CD4-positive, alpha-beta T cell (primary cell): ENCODE measurements at regions of chr11 and their contacts with region 1.

Region 1: DNA sequence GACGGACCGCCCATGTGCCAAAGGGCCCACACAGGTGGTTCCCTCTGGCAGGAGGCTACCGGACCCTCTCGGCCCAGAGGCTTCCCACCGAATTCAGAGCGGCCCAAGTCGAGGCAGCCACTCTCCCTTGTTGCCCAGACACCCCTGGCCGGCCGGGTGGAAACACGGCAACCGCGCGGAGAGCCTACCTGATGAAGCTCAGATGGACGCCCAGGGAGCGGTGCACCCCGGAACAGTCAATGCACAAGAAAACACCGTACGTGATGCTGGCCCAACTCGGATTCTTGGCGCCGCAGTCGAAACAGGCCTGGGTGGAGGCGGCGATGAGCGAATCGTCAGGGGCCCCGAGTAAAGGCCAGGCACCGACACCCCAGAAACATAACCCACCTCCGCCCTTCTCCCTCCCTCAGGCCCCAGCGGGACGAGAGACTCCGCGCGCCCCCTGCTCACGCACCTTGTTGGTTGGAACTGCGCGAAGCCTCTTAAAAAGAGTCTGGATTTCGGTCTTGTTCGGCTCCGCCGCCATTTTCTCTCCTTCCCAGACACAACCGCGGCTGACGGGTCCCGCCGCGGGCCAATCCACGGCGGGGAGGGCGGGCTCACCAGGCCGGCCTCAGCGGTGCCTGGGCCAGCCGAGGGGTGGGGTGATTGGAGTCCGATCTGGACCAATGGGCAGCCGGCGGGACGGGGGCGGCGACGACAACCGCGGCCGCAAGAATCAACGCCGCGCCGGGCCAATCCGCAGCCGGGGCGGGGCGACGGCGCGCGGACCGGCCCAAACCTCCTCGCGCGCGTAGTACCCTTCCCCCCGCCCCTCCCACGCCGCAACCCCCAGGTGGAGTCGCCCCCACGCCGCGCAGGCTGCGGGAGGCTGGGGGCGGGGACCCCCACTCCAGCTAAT is at the start of gene ARFGAP2:
- DNase-seq: peak; percentile 89 to 99 (median 95)
- ATAC-seq: peak; percentile 88
- H3K4me3 ChIP-seq: peak within 1 kb of the TSS; percentile 100
- H3K4me3 Mint-ChIP-seq: peak within 1 kb of the TSS; percentile 99
- H3K27ac ChIP-seq: peak within 1 kb of the TSS; percentile 90 to 96
- H3K27ac Mint-ChIP-seq: peak within 1 kb of the TSS; percentile 97
- H3K4me1 ChIP-seq: peaks cover 56% of the 10 kb centered on the region
- H3K4me1 Mint-ChIP-seq: peaks cover 54% of the 10 kb centered on the region
- H3K27me3 ChIP-seq: no peaks in the 10 kb centered on the region
- H3K27me3 Mint-ChIP-seq: peaks cover 5% of the 10 kb centered on the region
- CTCF ChIP-seq: no peak
- total RNA-seq, gene ARFGAP2: 161 to 174 TPM

Region 2: DNA sequence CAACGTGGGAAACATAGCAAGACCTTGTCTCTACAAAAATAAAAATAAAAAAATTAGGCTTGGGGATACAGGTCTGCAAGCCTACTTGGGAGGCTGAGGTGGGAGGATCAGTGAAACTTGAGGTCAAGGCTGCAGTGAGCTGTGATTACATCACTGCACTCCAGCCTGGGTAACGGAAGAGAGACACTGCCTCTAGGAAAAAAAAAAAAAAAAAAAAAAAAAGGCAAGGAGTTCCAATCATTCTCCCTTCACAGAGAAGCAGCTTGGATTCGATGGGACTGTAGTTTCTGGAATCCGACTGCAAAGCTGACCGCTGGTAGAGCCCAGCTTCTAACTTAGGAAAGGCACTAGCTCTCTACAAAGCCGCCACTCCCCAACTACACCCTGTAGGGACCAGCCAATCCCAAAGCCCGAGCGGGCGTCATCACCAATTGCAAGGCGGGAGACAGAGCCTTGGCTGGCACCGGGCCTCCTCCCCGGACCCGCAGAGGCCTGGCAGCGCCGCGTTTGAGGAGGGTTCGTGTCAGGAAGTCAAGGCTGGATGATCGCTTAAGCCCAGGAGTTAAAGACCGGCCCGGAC is 37.5 kb after region 1 on chr11:
- CTCF ChIA-PET with region 1: interaction called, 5 read pairs
- POLR2A ChIA-PET with region 1: interaction called, 47 read pairs
- intact Hi-C with region 1: loop called (anchors 1 to 2 kb)
- DNase-seq: peak; percentile 68 to 92 (median 78)
- ATAC-seq: peak; percentile 70
- H3K4me3 ChIP-seq: peak overlapping the region; percentile 67
- H3K4me3 Mint-ChIP-seq: peak overlapping the region; percentile 100
- H3K27ac ChIP-seq: peak overlapping the region; percentile 80 to 91
- H3K27ac Mint-ChIP-seq: peak overlapping the region; percentile 97
- H3K4me1 ChIP-seq: peaks cover 32% of the 10 kb centered on the region
- H3K4me1 Mint-ChIP-seq: peaks cover 38% of the 10 kb centered on the region
- H3K27me3 ChIP-seq: no peaks in the 10 kb centered on the region
- H3K27me3 Mint-ChIP-seq: no peaks in the 10 kb centered on the region
- CTCF ChIP-seq: no peak

Region 3: GRCh38 chr11:47259178-47259977 is 82.8 kb after region 1 on chr11:
- CTCF ChIA-PET with region 1: interaction called, 13 read pairs
- POLR2A ChIA-PET with region 1: interaction called, 10 read pairs
- intact Hi-C with region 1: loop called in 1 of 2 experiments (anchors 1 kb)
- DNase-seq: peak in 8 of 14 experiments; percentile 9 to 61 (median 30)
- ATAC-seq: peak; percentile 82
- H3K4me3 ChIP-seq: no peak overlapping the region
- H3K4me3 Mint-ChIP-seq: no peak overlapping the region
- H3K27ac ChIP-seq: no peak overlapping the region
- H3K27ac Mint-ChIP-seq: no peak overlapping the region
- H3K4me1 ChIP-seq: peaks cover 17% of the 10 kb centered on the region
- H3K4me1 Mint-ChIP-seq: peaks cover 14% of the 10 kb centered on the region
- H3K27me3 ChIP-seq: no peaks in the 10 kb centered on the region
- H3K27me3 Mint-ChIP-seq: no peaks in the 10 kb centered on the region
- CTCF ChIP-seq: peak; percentile 47

Region 4: GRCh38 chr11:47426061-47426956 is 249.7 kb after region 1 on chr11 and contains the start of gene PSMC3:
- CTCF ChIA-PET with region 1: no interaction called
- POLR2A ChIA-PET with region 1: no interaction called
- intact Hi-C with region 1: loop called (anchors 2 to 5 kb)
- DNase-seq: peak; percentile 93 to 99 (median 98)
- ATAC-seq: peak; percentile 98
- H3K4me3 ChIP-seq: peak within 1 kb of the TSS; percentile 100
- H3K4me3 Mint-ChIP-seq: peak within 1 kb of the TSS; percentile 100
- H3K27ac ChIP-seq: peak within 1 kb of the TSS; percentile 84
- H3K27ac Mint-ChIP-seq: peak within 1 kb of the TSS; percentile 90
- H3K4me1 ChIP-seq: peaks cover 30% of the 10 kb centered on the region
- H3K4me1 Mint-ChIP-seq: peaks cover 25% of the 10 kb centered on the region
- H3K27me3 ChIP-seq: no peaks in the 10 kb centered on the region
- H3K27me3 Mint-ChIP-seq: no peaks in the 10 kb centered on the region
- CTCF ChIP-seq: no peak
- total RNA-seq, gene PSMC3: 51.3 to 59.5 TPM

Region 5: GRCh38 chr11:47766305-47767227 is 590.0 kb after region 1 on chr11:
- CTCF ChIA-PET with region 1: no interaction called
- POLR2A ChIA-PET with region 1: no interaction called
- intact Hi-C with region 1: loop called in 1 of 2 experiments (anchors 5 kb)
- DNase-seq: peak; percentile 56 to 90 (median 68)
- ATAC-seq: peak; percentile 38
- H3K4me3 ChIP-seq: peak overlapping the region; percentile 89
- H3K4me3 Mint-ChIP-seq: peak overlapping the region; percentile 98
- H3K27ac ChIP-seq: peak overlapping the region; percentile 97 to 98
- H3K27ac Mint-ChIP-seq: peak overlapping the region; percentile 99
- H3K4me1 ChIP-seq: peaks cover 35% of the 10 kb centered on the region
- H3K4me1 Mint-ChIP-seq: peaks cover 34% of the 10 kb centered on the region
- H3K27me3 ChIP-seq: no peaks in the 10 kb centered on the region
- H3K27me3 Mint-ChIP-seq: no peaks in the 10 kb centered on the region
- CTCF ChIP-seq: no peak